ENCODE measurements at regions of chr10 and their contacts with region 1.

Region 1: DNA sequence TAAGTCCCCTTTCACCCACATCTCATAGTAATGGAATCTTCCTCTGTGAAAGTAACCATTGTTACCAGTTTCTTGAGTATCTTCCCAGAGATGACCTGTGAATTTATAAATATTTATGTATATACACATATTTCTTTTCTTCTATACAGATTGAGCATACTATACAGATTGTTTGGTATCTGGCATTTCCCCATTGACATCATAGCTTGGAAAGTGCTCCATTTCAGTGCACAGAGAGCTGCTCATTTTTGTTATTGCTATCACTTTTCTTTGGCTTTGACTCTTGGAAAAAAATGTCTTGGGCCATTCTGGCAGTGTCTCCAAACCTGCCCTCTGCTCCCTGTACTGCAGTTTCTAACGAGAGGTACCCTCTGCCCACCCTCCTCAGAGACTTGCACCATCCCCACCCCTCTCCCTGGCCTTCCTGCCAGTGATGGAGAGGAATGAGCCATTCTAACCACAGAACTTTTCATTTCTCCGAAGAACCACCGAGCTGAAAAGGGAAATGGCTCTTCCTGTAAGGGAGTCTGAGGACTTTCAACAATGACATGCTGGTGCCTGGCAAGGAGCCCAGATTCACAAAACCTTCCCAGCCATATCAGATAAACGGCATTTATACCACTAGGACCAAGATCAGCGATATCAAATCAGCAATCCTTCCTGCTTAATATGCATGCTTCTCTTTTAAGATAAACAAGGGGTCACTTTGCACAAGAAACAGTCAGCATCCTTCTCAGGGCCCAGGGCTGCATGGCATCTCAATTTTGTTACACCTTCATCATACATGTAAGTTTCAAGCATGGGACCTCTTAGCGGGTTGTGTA is 19.7 kb upstream of the CCSER2 start:
- DNase-seq: peak; percentile 74
- H3K4me3 Mint-ChIP-seq: peak overlapping the region; percentile 45
- H3K27ac Mint-ChIP-seq: peak overlapping the region; percentile 82
- H3K4me1 Mint-ChIP-seq: peaks cover 34% of the 10 kb centered on the region
- H3K27me3 Mint-ChIP-seq: no peaks in the 10 kb centered on the region

Region 2: DNA sequence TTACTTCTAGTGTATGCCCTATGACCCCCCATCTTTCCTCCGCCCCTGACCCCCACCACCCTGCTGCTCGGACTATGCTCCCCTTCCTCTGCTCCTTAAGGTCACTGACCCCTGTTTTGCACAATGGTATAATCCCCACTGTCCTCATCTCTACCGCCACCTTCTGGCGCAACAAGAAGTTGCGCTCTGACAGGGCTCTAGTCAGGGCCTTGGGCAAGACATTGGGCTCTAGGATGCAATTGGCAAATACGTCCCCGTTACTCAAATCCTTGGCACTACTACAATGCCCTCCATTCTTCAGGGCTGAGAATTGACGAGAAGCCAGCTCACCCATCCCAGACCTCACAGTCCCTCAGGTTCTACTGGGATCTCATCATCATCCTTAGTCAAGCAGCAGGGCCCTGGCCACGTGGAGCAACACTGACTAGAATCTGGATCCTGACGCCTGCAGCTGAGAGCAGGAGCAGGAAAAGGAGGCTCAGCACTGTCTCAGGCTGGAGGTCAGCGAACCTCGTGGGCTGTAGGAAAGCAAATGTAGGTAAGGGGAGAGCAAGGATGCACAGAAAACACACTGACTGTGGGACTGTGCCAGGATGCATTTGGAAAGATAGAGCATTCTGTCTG is 94.0 kb before region 1 on chr10:
- CTCF ChIA-PET with region 1: no interaction called
- POLR2A ChIA-PET with region 1: no interaction called
- intact Hi-C with region 1: no loop called
- DNase-seq: peak; percentile 62
- H3K4me3 Mint-ChIP-seq: no peak overlapping the region
- H3K27ac Mint-ChIP-seq: no peak overlapping the region
- H3K4me1 Mint-ChIP-seq: no peaks in the 10 kb centered on the region
- H3K27me3 Mint-ChIP-seq: no peaks in the 10 kb centered on the region

Region 3: GRCh38 chr10:84291384-84291783 is 17.3 kb before region 1 on chr10:
- CTCF ChIA-PET with region 1: no interaction called
- POLR2A ChIA-PET with region 1: no interaction called
- intact Hi-C with region 1: loop called (anchors 1 kb)
- DNase-seq: no peak
- H3K4me3 Mint-ChIP-seq: no peak overlapping the region
- H3K27ac Mint-ChIP-seq: no peak overlapping the region
- H3K4me1 Mint-ChIP-seq: peaks cover 20% of the 10 kb centered on the region
- H3K27me3 Mint-ChIP-seq: no peaks in the 10 kb centered on the region

Region 4: GRCh38 chr10:84333864-84334451 is 25.3 kb after region 1 on chr10:
- CTCF ChIA-PET with region 1: interaction called, 3 read pairs
- POLR2A ChIA-PET with region 1: interaction called, 10 read pairs
- intact Hi-C with region 1: loop called (anchors 1 kb)
- DNase-seq: peak; percentile 82
- H3K4me3 Mint-ChIP-seq: peak overlapping the region; percentile 36
- H3K27ac Mint-ChIP-seq: peak overlapping the region; percentile 78
- H3K4me1 Mint-ChIP-seq: peaks cover 40% of the 10 kb centered on the region
- H3K27me3 Mint-ChIP-seq: no peaks in the 10 kb centered on the region